Endothelial cell of umbilical vein (primary cell): ENCODE measurements at regions of chr3 and their contacts with region 1.

Region 1: DNA sequence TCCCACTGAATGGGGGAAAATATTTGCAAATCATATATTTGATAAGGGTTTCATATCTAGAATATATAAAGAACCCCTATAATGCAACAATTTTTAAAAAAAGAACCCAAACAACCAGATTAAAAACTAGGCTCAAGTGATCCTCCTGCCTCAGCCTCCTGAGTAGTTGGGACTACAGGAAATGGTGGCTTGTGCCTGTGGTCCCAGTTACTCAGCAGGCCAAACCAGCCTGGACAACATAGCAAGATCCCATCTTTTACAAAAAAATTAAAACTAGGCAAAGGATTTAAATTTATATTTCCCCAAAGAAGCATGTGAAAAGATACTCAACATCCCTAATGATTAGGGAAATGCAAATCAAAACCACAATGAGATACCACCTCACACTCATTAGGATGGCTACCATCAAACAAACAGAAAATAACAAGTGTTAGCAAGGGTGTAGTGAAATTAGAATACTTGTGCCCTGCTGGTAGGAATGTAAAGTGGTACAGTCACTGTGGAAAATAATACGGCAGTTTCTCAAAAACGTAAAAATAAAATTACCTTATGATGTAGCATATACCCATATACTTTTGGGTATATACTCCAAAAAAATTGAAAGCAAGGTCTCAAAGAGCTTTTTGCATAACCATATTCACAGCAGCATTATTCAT is 19.7 kb downstream of the TFDP2 start:
- DNase-seq: no peak
- H3K4me3 ChIP-seq: no peak overlapping the region
- H3K27ac ChIP-seq: no peak overlapping the region
- H3K4me1 ChIP-seq: no peaks in the 10 kb centered on the region
- H3K27me3 ChIP-seq: no peaks in the 10 kb centered on the region
- CTCF ChIP-seq: no peak
- POLR2A ChIP-seq: no peak

Region 2: DNA sequence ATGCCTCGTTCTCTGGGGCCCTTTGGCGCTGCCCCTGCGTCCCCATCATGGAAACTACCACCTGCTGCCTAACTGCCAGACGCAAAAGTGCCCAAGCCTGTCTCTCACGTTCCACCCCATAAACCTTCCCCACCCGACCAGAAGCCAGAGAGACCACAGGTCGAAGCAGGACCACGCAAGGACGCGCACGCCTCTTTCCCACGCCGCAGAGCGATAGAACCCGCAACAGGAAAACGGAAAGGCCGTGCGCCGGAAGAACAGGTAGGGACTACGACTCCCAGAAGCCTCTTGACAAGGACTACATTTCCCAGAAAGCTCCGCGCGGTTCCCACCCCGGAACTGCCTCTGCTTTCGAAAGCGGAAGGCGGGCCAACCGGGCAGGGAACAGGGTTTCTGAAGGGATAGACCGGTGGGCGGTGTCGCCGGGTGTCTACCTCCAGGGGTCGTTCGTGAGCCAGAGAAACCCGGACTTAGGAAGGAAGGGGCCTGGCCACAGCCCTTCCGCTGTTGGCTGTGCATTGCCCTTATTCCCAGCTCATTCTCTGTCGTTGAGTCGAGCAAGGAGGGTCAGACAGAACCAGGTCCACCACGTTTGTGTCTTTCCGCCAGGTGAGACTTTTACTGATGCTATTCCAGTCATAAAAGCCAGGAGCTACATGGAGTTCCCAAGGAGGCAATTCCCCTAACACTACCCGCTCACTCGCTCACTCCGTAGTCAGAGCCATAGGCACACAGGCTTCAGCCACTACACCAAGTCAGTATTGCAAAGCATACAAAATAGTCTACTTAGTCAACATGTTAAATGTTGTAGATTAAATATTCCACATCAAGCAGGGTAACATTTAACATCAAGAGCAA is 817.9 kb before region 1 on chr3:
- CTCF ChIA-PET with region 1: no interaction called
- POLR2A ChIA-PET with region 1: no interaction called
- dilution Hi-C with region 1: no loop called
- intact Hi-C with region 1: no loop called
- DNase-seq: peak; percentile 97
- H3K4me3 ChIP-seq: peak overlapping the region; percentile 1 to 65 (median 49)
- H3K27ac ChIP-seq: peak overlapping the region; percentile 57
- H3K4me1 ChIP-seq: peaks cover 11% of the 10 kb centered on the region
- H3K27me3 ChIP-seq: no peaks in the 10 kb centered on the region
- CTCF ChIP-seq: peak; percentile 80 to 86
- POLR2A ChIP-seq: peak; percentile 76

Region 3: GRCh38 chr3:141959921-141960554 is 169.6 kb before region 1 on chr3:
- CTCF ChIA-PET with region 1: interaction called, 10 read pairs
- POLR2A ChIA-PET with region 1: no interaction called
- dilution Hi-C with region 1: no loop called
- intact Hi-C with region 1: loop called (anchors 1 kb)
- DNase-seq: no peak
- H3K4me3 ChIP-seq: no peak overlapping the region
- H3K27ac ChIP-seq: no peak overlapping the region
- H3K4me1 ChIP-seq: no peaks in the 10 kb centered on the region
- H3K27me3 ChIP-seq: no peaks in the 10 kb centered on the region
- CTCF ChIP-seq: no peak
- POLR2A ChIP-seq: no peak

Region 4: GRCh38 chr3:142148792-142149672 is 19.4 kb after region 1 on chr3 and contains the start of gene TFDP2:
- CTCF ChIA-PET with region 1: interaction called, 11 read pairs
- POLR2A ChIA-PET with region 1: interaction called, 3 read pairs
- dilution Hi-C with region 1: no loop called
- intact Hi-C with region 1: no loop called
- DNase-seq: peak; percentile 92
- H3K4me3 ChIP-seq: peak within 1 kb of the TSS; percentile 24 to 75 (median 51)
- H3K27ac ChIP-seq: peak within 1 kb of the TSS; percentile 28
- H3K4me1 ChIP-seq: peaks cover 13% of the 10 kb centered on the region
- H3K27me3 ChIP-seq: peaks cover 0 to 3% of the 10 kb centered on the region in 2 experiments
- CTCF ChIP-seq: no peak
- POLR2A ChIP-seq: no peak
- total RNA-seq, gene TFDP2: 21.5 and 23.6 TPM in 2 replicates

Region 5: DNA sequence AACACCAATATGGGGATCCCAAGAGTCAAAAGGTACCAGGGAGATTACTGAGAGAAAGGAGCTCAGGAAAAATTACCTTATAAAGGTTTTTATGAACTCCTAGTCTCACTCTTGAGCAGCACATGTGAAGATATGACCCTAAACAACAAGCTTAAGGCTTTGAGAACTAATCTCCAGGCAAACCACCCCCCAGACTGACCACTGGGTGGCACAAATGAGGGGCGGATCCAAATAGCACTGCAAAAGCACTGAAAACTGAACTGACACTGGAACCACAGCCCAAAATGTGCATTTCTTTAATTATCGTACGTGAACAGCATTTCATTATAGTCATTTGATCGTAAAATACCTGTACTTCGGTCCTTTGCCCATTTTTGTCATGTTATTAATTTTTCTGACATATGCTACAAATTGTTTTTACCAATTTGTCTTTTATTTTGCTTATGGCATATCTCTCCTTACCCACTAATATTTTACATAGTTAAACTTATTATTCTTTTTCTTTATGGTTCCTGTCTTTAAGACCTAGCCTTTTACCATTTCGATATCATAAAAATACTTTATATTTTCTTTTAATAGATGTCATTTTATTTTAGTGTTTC is 51.2 kb after region 1 on chr3:
- CTCF ChIA-PET with region 1: interaction called, 20 read pairs
- POLR2A ChIA-PET with region 1: no interaction called
- dilution Hi-C with region 1: no loop called
- intact Hi-C with region 1: no loop called
- DNase-seq: peak; percentile 51
- H3K4me3 ChIP-seq: no peak overlapping the region
- H3K27ac ChIP-seq: no peak overlapping the region
- H3K4me1 ChIP-seq: no peaks in the 10 kb centered on the region
- H3K27me3 ChIP-seq: no peaks in the 10 kb centered on the region
- CTCF ChIP-seq: peak; percentile 54 to 64
- POLR2A ChIP-seq: no peak

Region 6: GRCh38 chr3:142279965-142280590 is 150.4 kb after region 1 on chr3:
- CTCF ChIA-PET with region 1: interaction called, 225 read pairs
- POLR2A ChIA-PET with region 1: interaction called, 3 read pairs
- dilution Hi-C with region 1: no loop called
- intact Hi-C with region 1: loop called (anchors 1 kb)
- DNase-seq: peak; percentile 66
- H3K4me3 ChIP-seq: no peak overlapping the region
- H3K27ac ChIP-seq: no peak overlapping the region
- H3K4me1 ChIP-seq: no peaks in the 10 kb centered on the region
- H3K27me3 ChIP-seq: peaks cover 0 to 2% of the 10 kb centered on the region in 2 experiments
- CTCF ChIP-seq: peak; percentile 43 to 49
- POLR2A ChIP-seq: no peak